CD8-positive, alpha-beta T cell (primary cell): ENCODE measurements at regions of chr21 and their contacts with region 1.

Region 1: DNA sequence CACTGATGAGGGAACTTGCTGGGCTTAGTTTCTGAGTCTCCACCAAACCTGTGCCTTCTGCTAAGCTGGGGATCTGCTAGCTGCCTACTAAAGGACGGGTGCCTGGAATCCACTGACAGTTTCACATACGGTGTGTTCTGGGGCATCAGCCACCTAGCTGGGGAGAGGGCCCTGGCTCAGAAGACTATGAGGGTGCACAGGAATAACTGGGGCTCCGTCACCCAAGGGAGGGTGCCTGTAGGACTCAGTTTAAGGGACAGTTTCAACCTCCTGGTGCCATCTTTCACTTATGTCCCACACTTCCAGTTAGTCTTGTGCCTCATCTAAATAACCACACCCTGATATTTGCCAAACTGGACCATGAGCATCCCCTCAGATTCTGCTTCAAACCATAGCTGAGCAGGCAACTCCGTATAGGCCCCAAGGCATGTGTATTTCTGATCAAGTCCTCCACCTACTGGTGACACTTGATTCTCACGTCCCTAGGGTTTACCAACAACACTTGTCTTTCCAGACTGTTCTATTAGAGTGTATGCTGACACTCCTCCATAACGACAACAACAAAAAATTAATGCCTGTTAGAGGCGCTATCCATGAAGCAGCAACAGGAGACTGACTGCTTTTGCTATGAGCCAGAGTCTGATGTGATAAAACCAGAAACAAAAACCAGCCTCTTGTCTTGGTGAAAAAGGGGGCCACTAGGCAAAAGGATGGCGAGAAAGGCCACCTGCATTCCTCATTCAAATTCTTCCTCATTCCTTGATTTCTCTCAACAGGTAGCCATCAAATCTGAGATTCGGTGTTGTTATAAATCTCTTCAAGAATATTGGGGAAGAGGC is 55.0 kb upstream of the PAXBP1 start:
- DNase-seq: peak in 6 of 9 experiments; percentile 7 to 64 (median 38)
- ATAC-seq: peak; percentile 70
- H3K4me3 ChIP-seq: no peak overlapping the region
- H3K4me3 Mint-ChIP-seq: no peak overlapping the region
- H3K27ac ChIP-seq: no peak overlapping the region
- H3K27ac Mint-ChIP-seq: no peak overlapping the region
- H3K4me1 ChIP-seq: no peaks in the 10 kb centered on the region
- H3K4me1 Mint-ChIP-seq: peaks cover 3% of the 10 kb centered on the region
- H3K27me3 ChIP-seq: peaks cover 0 to 2% of the 10 kb centered on the region in 2 experiments
- H3K27me3 Mint-ChIP-seq: no peaks in the 10 kb centered on the region
- CTCF ChIP-seq: peak; percentile 53

Region 2: GRCh38 chr21:32653311-32653901 is 173.1 kb before region 1 on chr21:
- CTCF ChIA-PET with region 1: interaction called, 16 read pairs
- POLR2A ChIA-PET with region 1: no interaction called
- intact Hi-C with region 1: loop called in 1 of 2 experiments (anchors 1 kb)
- DNase-seq: peak in 4 of 9 experiments; percentile 12 to 52 (median 31)
- ATAC-seq: peak; percentile 52
- H3K4me3 ChIP-seq: no peak overlapping the region
- H3K4me3 Mint-ChIP-seq: no peak overlapping the region
- H3K27ac ChIP-seq: no peak overlapping the region
- H3K27ac Mint-ChIP-seq: no peak overlapping the region
- H3K4me1 ChIP-seq: no peaks in the 10 kb centered on the region
- H3K4me1 Mint-ChIP-seq: no peaks in the 10 kb centered on the region
- H3K27me3 ChIP-seq: no peaks in the 10 kb centered on the region
- H3K27me3 Mint-ChIP-seq: no peaks in the 10 kb centered on the region
- CTCF ChIP-seq: peak; percentile 62

Region 3: GRCh38 chr21:32687643-32688345 is 138.8 kb before region 1 on chr21:
- CTCF ChIA-PET with region 1: interaction called, 8 read pairs
- POLR2A ChIA-PET with region 1: no interaction called
- intact Hi-C with region 1: loop called (anchors 1 to 2 kb)
- DNase-seq: peak in 1 of 9 experiments; percentile 15
- ATAC-seq: no peak
- H3K4me3 ChIP-seq: no peak overlapping the region
- H3K4me3 Mint-ChIP-seq: no peak overlapping the region
- H3K27ac ChIP-seq: no peak overlapping the region
- H3K27ac Mint-ChIP-seq: no peak overlapping the region
- H3K4me1 ChIP-seq: no peaks in the 10 kb centered on the region
- H3K4me1 Mint-ChIP-seq: no peaks in the 10 kb centered on the region
- H3K27me3 ChIP-seq: no peaks in the 10 kb centered on the region
- H3K27me3 Mint-ChIP-seq: no peaks in the 10 kb centered on the region
- CTCF ChIP-seq: no peak